CD8-positive, alpha-beta T cell (primary cell): ENCODE measurements at regions of chr11 and their contacts with region 1.

Region 1: DNA sequence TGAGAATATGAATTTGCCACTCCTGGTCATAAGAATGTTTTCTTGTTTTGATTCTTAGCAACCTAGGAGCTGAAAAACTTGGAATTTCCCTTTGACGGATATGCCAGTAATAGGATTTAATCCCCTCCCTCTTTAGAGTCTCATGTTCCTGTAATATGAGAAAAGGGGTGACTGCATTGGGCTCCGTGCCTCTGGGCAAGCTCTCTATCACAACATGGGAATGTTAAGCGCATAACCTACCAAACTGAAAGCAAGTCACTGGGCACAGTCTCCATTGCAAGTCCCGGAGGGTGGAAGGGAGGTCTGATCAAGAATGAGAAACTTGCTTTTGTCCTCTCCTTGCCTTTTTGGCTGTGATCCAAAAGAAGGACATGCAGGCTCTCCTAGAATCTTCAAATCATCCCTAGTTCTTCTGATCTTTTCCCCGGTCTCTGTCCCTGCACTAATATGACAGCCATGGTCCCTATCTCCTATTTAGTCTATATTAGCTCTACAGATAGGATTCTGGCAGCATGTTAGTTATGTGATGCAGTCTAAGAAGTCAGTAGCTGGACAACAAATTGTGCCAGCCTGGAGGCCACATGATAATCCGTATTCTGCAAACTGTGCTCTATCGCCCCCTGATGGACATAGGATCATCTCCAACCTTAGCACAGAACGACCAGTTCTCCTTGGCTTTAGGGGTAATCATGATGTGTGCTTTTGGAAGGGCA is 11.7 kb downstream of the OR10D3 start:
- DNase-seq: peak in 6 of 9 experiments; percentile 10 to 53 (median 26)
- ATAC-seq: no peak
- H3K4me3 ChIP-seq: no peak overlapping the region
- H3K4me3 Mint-ChIP-seq: no peak overlapping the region
- H3K27ac ChIP-seq: no peak overlapping the region
- H3K27ac Mint-ChIP-seq: no peak overlapping the region
- H3K4me1 ChIP-seq: no peaks in the 10 kb centered on the region
- H3K4me1 Mint-ChIP-seq: no peaks in the 10 kb centered on the region
- H3K27me3 ChIP-seq: no peaks in the 10 kb centered on the region
- H3K27me3 Mint-ChIP-seq: peaks cover 7% of the 10 kb centered on the region
- CTCF ChIP-seq: peak; percentile 52

Region 2: GRCh38 chr11:123995119-123995518 is 199.7 kb before region 1 on chr11 and contains the start of gene OR10G6:
- CTCF ChIA-PET with region 1: no interaction called
- POLR2A ChIA-PET with region 1: no interaction called
- intact Hi-C with region 1: no loop called
- DNase-seq: no peak
- ATAC-seq: no peak
- H3K4me3 ChIP-seq: no peak within 1 kb of the TSS
- H3K4me3 Mint-ChIP-seq: no peak within 1 kb of the TSS
- H3K27ac ChIP-seq: no peak within 1 kb of the TSS
- H3K27ac Mint-ChIP-seq: no peak within 1 kb of the TSS
- H3K4me1 ChIP-seq: no peaks in the 10 kb centered on the region
- H3K4me1 Mint-ChIP-seq: no peaks in the 10 kb centered on the region
- H3K27me3 ChIP-seq: no peaks in the 10 kb centered on the region
- H3K27me3 Mint-ChIP-seq: no peaks in the 10 kb centered on the region
- CTCF ChIP-seq: no peak
- total RNA-seq, gene OR10G6: not detected

Region 3: GRCh38 chr11:124108156-124108555 is 86.7 kb before region 1 on chr11:
- CTCF ChIA-PET with region 1: no interaction called
- POLR2A ChIA-PET with region 1: no interaction called
- intact Hi-C with region 1: loop called in 1 of 2 experiments (anchors 10 kb)
- DNase-seq: peak in 2 of 9 experiments; percentile 4 to 7
- ATAC-seq: no peak
- H3K4me3 ChIP-seq: no peak overlapping the region
- H3K4me3 Mint-ChIP-seq: no peak overlapping the region
- H3K27ac ChIP-seq: no peak overlapping the region
- H3K27ac Mint-ChIP-seq: no peak overlapping the region
- H3K4me1 ChIP-seq: no peaks in the 10 kb centered on the region
- H3K4me1 Mint-ChIP-seq: no peaks in the 10 kb centered on the region
- H3K27me3 ChIP-seq: no peaks in the 10 kb centered on the region
- H3K27me3 Mint-ChIP-seq: peaks cover 12% of the 10 kb centered on the region
- CTCF ChIP-seq: no peak

Region 4: DNA sequence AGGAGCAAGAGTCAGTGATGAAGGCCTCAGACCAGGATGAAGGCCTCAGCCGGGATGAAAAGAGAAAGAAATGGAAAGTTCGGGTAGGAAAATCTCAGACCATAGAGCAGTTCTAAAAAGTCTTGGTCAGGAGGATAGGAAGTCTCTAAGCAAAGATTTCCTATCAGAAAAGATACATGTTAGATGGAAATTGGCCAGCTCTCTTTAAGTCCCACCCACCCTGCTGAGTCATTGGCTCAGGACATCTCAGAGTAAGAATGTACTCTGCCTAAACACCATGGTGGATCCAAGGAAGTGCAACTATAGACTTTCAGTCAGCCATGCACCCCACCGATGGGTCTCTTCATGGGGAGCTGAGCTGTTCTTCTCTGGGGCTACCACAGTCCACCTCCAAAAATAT is 199.6 kb after region 1 on chr11:
- CTCF ChIA-PET with region 1: no interaction called
- POLR2A ChIA-PET with region 1: no interaction called
- intact Hi-C with region 1: no loop called
- DNase-seq: no peak
- ATAC-seq: no peak
- H3K4me3 ChIP-seq: no peak overlapping the region
- H3K4me3 Mint-ChIP-seq: no peak overlapping the region
- H3K27ac ChIP-seq: no peak overlapping the region
- H3K27ac Mint-ChIP-seq: no peak overlapping the region
- H3K4me1 ChIP-seq: no peaks in the 10 kb centered on the region
- H3K4me1 Mint-ChIP-seq: no peaks in the 10 kb centered on the region
- H3K27me3 ChIP-seq: peaks cover 0 to 3% of the 10 kb centered on the region in 2 experiments
- H3K27me3 Mint-ChIP-seq: peaks cover 13% of the 10 kb centered on the region
- CTCF ChIP-seq: no peak